PC-3 (cell line): ENCODE measurements at regions of chr10 and their contacts with region 1.

Region 1: DNA sequence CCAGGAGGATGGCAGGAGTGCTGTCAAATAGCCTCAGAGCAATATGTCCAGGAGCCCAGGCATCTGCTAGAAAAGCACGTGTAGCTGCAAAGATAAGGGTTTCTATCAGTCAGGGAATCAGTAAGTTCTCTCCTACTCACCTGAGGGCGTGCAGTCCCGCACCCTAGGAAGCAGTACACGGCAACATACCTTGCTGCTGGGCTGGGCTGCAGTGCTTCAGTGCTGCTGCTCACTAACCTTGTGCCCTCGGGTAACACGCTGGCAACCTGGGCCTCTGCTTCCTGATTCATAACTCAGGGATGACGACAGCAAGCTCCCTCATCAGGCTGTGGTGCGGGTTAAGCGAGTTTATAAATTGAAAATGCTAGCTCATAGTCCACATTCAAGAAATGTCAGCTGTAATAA is 29.5 kb upstream of the CCNY start:
- DNase-seq: peak; percentile 99
- ATAC-seq: peak; percentile 89
- H3K4me3 ChIP-seq: peak overlapping the region; percentile 56
- H3K27ac ChIP-seq: peak overlapping the region; percentile 83
- H3K4me1 ChIP-seq: peaks cover 17% of the 10 kb centered on the region
- H3K27me3 ChIP-seq: no peaks in the 10 kb centered on the region
- CTCF ChIP-seq: no peak; the same call in 1 of the 2 replicates

Region 2: GRCh38 chr10:35251373-35252100 is 55.3 kb before region 1 on chr10:
- CTCF ChIA-PET with region 1: no interaction called
- POLR2A ChIA-PET with region 1: interaction called, 9 read pairs
- intact Hi-C with region 1: loop called (anchors 2 kb)
- DNase-seq: no peak
- ATAC-seq: peak; percentile 52
- H3K4me3 ChIP-seq: no peak overlapping the region
- H3K27ac ChIP-seq: 0 out of 2 replicates have a peak overlapping the region, but pooled peaks have one; percentile 0
- H3K4me1 ChIP-seq: peaks cover 22% of the 10 kb centered on the region
- H3K27me3 ChIP-seq: no peaks in the 10 kb centered on the region
- CTCF ChIP-seq: peak; percentile 53

Region 3: GRCh38 chr10:35523670-35524225 is 216.9 kb after region 1 on chr10:
- CTCF ChIA-PET with region 1: no interaction called
- POLR2A ChIA-PET with region 1: no interaction called
- intact Hi-C with region 1: no loop called
- DNase-seq: no peak
- ATAC-seq: no peak
- H3K4me3 ChIP-seq: no peak overlapping the region
- H3K27ac ChIP-seq: no peak overlapping the region
- H3K4me1 ChIP-seq: no peaks in the 10 kb centered on the region
- H3K27me3 ChIP-seq: no peaks in the 10 kb centered on the region
- CTCF ChIP-seq: no peak

Region 4: GRCh38 chr10:35635576-35635975 is 328.7 kb after region 1 on chr10:
- CTCF ChIA-PET with region 1: no interaction called
- POLR2A ChIA-PET with region 1: no interaction called
- intact Hi-C with region 1: no loop called
- DNase-seq: peak; percentile 100
- ATAC-seq: peak; percentile 21
- H3K4me3 ChIP-seq: peak overlapping the region; percentile 69
- H3K27ac ChIP-seq: peak overlapping the region; percentile 71
- H3K4me1 ChIP-seq: peaks cover 63% of the 10 kb centered on the region
- H3K27me3 ChIP-seq: no peaks in the 10 kb centered on the region
- CTCF ChIP-seq: peak; percentile 100

Region 5: DNA sequence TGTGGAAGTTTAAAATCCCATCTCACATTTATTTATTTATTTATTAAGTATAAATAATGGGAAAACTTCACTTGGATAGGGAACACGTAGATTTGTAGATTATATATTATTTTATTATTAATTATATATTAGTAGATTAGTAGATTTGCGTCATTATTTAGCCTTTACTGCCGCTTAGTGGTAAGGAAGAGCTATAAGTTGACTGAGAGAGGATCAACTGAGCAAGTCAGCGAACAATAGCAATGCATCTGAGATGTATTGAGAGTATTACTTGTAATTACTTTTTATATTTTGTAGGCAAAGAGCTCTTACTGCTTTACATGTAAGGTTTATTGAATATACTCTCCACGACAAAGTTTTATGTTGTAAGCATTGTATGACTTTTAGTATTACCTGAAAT is 1574.0 kb after region 1 on chr10:
- CTCF ChIA-PET with region 1: no interaction called
- POLR2A ChIA-PET with region 1: no interaction called
- intact Hi-C with region 1: loop called (anchors 1 kb)
- DNase-seq: peak; percentile 93
- ATAC-seq: peak; percentile 86
- H3K4me3 ChIP-seq: no peak overlapping the region
- H3K27ac ChIP-seq: no peak overlapping the region
- H3K4me1 ChIP-seq: no peaks in the 10 kb centered on the region
- H3K27me3 ChIP-seq: 0 out of 2 replicates have a peak, but pooled peaks cover 3% of the 10 kb centered on the region
- CTCF ChIP-seq: peak; percentile 86